CD14-positive monocyte (primary cell): ENCODE measurements at regions of chr9 and their contacts with region 1.

Region 1: DNA sequence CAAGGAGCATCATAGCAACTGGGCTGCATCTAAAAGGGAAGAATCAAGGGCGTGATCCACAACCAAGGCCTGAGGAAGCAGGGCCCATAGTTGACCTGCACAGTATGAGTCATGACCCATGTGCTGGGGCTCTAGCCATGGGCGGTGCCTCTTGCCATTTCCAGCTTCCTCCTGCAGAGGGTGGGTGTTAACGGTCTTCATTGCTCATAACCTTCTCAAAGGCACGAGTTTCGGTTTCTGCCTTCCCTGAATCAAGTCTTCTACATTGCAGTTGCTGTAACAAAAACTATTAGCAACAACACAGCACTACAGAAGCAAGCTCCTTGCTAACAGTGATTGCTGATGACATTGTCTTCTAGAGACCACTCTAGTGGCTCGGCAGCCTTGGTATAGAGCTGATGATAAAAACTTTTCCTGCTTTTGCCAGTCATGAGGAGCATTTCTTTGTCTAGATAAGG is 66.9 kb downstream of the CTSL start:
- DNase-seq: peak; percentile 99 to 100 (median 100)
- H3K4me3 ChIP-seq: peak overlapping the region; percentile 21 to 67 (median 33)
- H3K4me3 Mint-ChIP-seq: peak overlapping the region in 1 of 2 donors; percentile 69
- H3K27ac ChIP-seq: peak overlapping the region; percentile 92 to 100
- H3K27ac Mint-ChIP-seq: peak overlapping the region; percentile 95 to 99 (median 98)
- H3K4me1 ChIP-seq: peaks cover 55 to 65% of the 10 kb centered on the region in 2 donors
- H3K4me1 Mint-ChIP-seq: peaks cover 68% of the 10 kb centered on the region
- H3K27me3 ChIP-seq: no peaks in the 10 kb centered on the region
- H3K27me3 Mint-ChIP-seq: peaks cover 0 to 3% (median 0%) of the 10 kb centered on the region in 3 donors
- CTCF ChIP-seq: peak; percentile 31

Region 2: GRCh38 chr9:87405677-87406542 is 386.9 kb before region 1 on chr9:
- intact Hi-C with region 1: loop called in 1 of 2 experiments (anchors 10 kb)
- DNase-seq: peak; percentile 77 to 91 (median 86)
- H3K4me3 ChIP-seq: peak overlapping the region in 1 of 3 experiments; percentile 35
- H3K4me3 Mint-ChIP-seq: peak overlapping the region in 1 of 2 donors; percentile 54
- H3K27ac ChIP-seq: peak overlapping the region; percentile 49 to 93
- H3K27ac Mint-ChIP-seq: peak overlapping the region; percentile 91 to 97 (median 94)
- H3K4me1 ChIP-seq: peaks cover 30 to 36% of the 10 kb centered on the region in 2 donors
- H3K4me1 Mint-ChIP-seq: peaks cover 40% of the 10 kb centered on the region
- H3K27me3 ChIP-seq: no peaks in the 10 kb centered on the region
- H3K27me3 Mint-ChIP-seq: peaks cover 1 to 3% (median 2%) of the 10 kb centered on the region in 3 donors
- CTCF ChIP-seq: no peak

Region 3: DNA sequence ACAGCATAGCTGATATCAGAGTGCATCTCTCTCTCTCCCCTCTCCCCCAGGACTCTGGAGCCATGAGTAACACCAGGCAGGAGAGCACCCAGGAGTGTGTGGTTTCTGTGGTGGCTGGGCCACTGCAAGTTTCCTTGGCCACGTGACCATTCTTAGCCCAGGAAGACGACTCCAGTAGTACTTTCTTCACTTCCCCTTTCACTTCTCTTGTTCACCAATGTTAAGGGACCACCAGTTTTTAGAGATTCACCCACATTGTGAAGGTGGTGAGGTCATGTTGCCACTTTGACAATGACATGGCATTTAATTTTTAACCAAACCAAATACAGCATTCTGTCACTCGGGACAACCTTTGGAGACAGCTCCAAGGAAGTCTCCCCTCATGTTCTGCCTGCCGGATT is 313.1 kb before region 1 on chr9:
- intact Hi-C with region 1: loop called in 1 of 2 experiments (anchors 10 kb)
- DNase-seq: peak; percentile 94 to 99 (median 98)
- H3K4me3 ChIP-seq: peak overlapping the region in 2 of 3 experiments; percentile 12 to 51
- H3K4me3 Mint-ChIP-seq: peak overlapping the region in 1 of 2 donors; percentile 51
- H3K27ac ChIP-seq: peak overlapping the region; percentile 43 to 81
- H3K27ac Mint-ChIP-seq: peak overlapping the region; percentile 87 to 95 (median 92)
- H3K4me1 ChIP-seq: peaks cover 32 to 37% of the 10 kb centered on the region in 2 donors
- H3K4me1 Mint-ChIP-seq: peaks cover 29% of the 10 kb centered on the region
- H3K27me3 ChIP-seq: no peaks in the 10 kb centered on the region
- H3K27me3 Mint-ChIP-seq: no peaks in the 10 kb centered on the region
- CTCF ChIP-seq: no peak

Region 4: DNA sequence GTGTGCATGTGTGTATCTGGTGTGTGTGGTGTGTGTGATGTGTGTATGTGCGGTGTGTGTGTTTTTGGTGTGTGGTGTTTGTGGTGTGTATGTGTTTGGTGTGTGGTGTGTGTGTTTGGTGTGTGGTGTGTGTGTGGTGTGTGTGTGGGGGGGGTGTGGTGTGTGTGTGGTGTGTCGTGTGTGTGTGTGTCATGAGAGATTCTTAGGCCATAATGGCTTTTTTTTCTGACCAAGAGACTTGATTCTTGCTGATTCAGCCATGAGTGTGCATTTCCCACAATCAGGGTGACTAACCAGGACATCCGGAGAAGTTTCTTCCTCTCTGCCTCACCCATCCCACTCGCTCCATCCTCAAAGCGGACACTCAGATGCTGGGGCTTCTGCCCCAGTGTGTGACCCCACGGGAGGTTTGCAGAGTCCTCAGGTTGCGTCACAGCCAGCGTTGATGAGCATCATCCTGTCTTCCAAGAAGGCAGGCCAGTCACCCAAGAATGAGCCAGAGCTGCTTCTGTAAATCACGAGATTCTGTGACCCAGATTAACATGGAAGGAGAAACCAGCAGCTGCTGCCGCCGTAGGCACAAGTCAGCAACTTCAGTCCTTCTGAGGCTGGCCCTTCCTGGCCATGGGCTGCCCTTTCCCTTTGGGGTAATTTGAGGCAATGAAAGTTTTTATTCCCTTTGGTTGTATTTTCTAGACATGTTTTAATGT is 79.4 kb before region 1 on chr9:
- intact Hi-C with region 1: loop called (anchors 5 kb)
- DNase-seq: peak; percentile 99 to 100 (median 99)
- H3K4me3 ChIP-seq: peak overlapping the region in 2 of 3 experiments; percentile 15 to 23
- H3K4me3 Mint-ChIP-seq: peak overlapping the region in 1 of 2 donors; percentile 78
- H3K27ac ChIP-seq: peak overlapping the region; percentile 56 to 69
- H3K27ac Mint-ChIP-seq: peak overlapping the region; percentile 80 to 94 (median 90)
- H3K4me1 ChIP-seq: peaks cover 26 to 36% of the 10 kb centered on the region in 2 donors
- H3K4me1 Mint-ChIP-seq: peaks cover 52% of the 10 kb centered on the region
- H3K27me3 ChIP-seq: peaks cover 0 to 2% of the 10 kb centered on the region in 2 donors
- H3K27me3 Mint-ChIP-seq: peaks cover 4 to 7% (median 5%) of the 10 kb centered on the region in 3 donors
- CTCF ChIP-seq: no peak

Region 5: DNA sequence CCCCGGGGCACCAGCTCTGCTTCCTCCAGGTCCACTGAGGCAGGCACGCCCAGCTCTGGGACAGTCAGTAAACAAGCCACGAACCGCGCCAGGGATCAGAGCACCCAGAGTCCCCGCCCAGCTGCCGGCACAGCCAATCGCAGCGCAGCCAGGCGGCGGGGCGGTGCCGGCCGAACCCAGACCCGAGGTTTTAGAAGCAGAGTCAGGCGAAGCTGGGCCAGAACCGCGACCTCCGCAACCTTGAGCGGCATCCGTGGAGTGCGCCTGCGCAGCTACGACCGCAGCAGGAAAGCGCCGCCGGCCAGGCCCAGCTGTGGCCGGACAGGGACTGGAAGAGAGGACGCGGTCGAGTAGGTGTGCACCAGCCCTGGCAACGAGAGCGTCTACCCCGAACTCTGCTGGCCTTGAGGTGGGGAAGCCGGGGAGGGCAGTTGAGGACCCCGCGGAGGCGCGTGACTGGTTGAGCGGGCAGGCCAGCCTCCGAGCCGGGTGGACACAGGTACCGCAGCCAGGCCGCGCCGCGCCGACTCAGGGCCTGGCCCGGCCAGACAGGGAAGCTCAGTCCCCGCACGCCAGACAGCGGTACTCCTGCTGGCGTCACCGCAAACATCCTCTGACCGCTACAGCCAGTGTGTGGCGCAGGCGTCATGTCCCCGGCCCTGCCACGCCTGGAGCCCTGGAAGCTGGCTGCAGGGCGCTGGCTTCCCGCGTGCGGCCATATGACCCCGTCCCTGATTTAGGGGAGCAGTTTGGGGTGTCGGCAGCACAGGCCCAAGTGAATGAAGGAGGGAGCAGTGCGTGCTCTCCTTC is 66.8 kb before region 1 on chr9 and contains the start of gene CTSL:
- intact Hi-C with region 1: loop called in 1 of 2 experiments (anchors 5 kb)
- DNase-seq: peak; percentile 85 to 93 (median 91)
- H3K4me3 ChIP-seq: peak within 1 kb of the TSS; percentile 33 to 73 (median 55)
- H3K4me3 Mint-ChIP-seq: peak within 1 kb of the TSS; percentile 92 to 95
- H3K27ac ChIP-seq: peak within 1 kb of the TSS; percentile 24 to 74
- H3K27ac Mint-ChIP-seq: peak within 1 kb of the TSS; percentile 76 to 93 (median 85)
- H3K4me1 ChIP-seq: peaks cover 36 to 45% of the 10 kb centered on the region in 2 donors
- H3K4me1 Mint-ChIP-seq: peaks cover 39% of the 10 kb centered on the region
- H3K27me3 ChIP-seq: peaks cover 5 to 29% of the 10 kb centered on the region in 2 donors
- H3K27me3 Mint-ChIP-seq: peaks cover 18 to 33% (median 28%) of the 10 kb centered on the region in 3 donors
- CTCF ChIP-seq: peak; percentile 23
- polyA plus RNA-seq, gene CTSL: 22.0 to 28.8 (median 28.3) TPM

Region 6: DNA sequence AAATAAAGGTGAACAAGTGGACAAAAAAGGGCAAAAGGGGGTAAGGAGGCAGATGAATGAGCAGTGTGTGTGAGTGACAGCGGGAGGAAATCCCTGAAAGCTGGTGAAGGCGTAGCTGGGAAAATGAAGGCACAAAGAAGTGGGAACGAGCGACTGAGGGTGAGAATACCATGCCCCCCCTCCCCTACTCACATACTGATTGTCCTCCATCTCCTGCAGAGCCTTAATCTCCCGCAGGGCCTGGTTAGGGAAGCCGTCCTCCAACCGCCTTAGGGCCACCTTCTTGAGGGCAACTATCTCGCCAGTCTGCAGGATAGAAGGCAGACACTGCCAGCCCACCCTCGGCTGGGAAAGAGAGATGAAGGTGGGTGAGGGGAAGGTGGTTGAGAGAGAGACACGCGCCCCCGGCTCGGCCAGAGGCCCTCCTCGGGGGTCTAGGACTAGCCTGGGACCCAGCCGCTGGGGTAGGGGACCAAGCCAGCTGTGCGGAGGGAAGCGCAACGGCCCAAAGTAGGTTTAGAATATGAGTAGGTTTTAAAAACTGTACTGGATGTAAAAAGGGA is 181.0 kb after region 1 on chr9:
- intact Hi-C with region 1: loop called in 1 of 2 experiments (anchors 10 kb)
- DNase-seq: no peak
- H3K4me3 ChIP-seq: peak overlapping the region; percentile 39 to 79 (median 78)
- H3K4me3 Mint-ChIP-seq: peak overlapping the region; percentile 89 to 98
- H3K27ac ChIP-seq: peak overlapping the region; percentile 86 to 94
- H3K27ac Mint-ChIP-seq: peak overlapping the region; percentile 94 to 99 (median 98)
- H3K4me1 ChIP-seq: peaks cover 17 to 18% of the 10 kb centered on the region in 2 donors
- H3K4me1 Mint-ChIP-seq: peaks cover 9% of the 10 kb centered on the region
- H3K27me3 ChIP-seq: no peaks in the 10 kb centered on the region
- H3K27me3 Mint-ChIP-seq: peaks cover 0 to 2% (median 0%) of the 10 kb centered on the region in 3 donors
- CTCF ChIP-seq: no peak

Region 7: GRCh38 chr9:88403340-88403739 is 610.5 kb after region 1 on chr9:
- intact Hi-C with region 1: no loop called
- DNase-seq: no peak
- H3K4me3 ChIP-seq: no peak overlapping the region
- H3K4me3 Mint-ChIP-seq: no peak overlapping the region
- H3K27ac ChIP-seq: no peak overlapping the region
- H3K27ac Mint-ChIP-seq: peak overlapping the region in 1 of 7 donors; percentile 42
- H3K4me1 ChIP-seq: no peaks in the 10 kb centered on the region
- H3K4me1 Mint-ChIP-seq: peaks cover 13% of the 10 kb centered on the region
- H3K27me3 ChIP-seq: no peaks in the 10 kb centered on the region
- H3K27me3 Mint-ChIP-seq: no peaks in the 10 kb centered on the region
- CTCF ChIP-seq: no peak